MCF 10A (cell line): ENCODE measurements at regions of chr11 and their contacts with region 1.

Region 1: DNA sequence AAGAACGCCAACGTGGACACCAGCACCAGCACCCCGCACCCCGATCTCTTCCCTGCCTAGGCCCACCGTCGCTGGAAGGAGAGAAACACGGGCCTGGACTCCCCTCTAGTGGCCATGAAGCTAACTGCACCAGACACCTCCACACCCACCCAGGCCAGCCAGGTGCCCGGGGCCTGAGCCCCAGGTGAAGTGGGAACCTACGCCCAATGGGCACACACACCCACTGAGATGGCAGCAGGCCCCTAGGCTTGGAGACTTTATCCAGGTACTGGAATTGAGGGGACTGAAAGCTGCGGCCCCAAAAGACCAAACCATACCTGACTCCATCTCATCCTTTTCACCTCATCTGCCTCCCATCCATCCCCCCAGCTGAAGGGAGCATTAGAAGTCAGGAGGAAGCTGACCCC is 81.0 kb downstream of the BUD13 start:
- DNase-seq: peak; percentile 57
- H3K4me3 Mint-ChIP-seq: no peak overlapping the region
- H3K27ac Mint-ChIP-seq: no peak overlapping the region
- H3K4me1 Mint-ChIP-seq: peaks cover 17% of the 10 kb centered on the region
- H3K27me3 Mint-ChIP-seq: peaks cover 17% of the 10 kb centered on the region
- CTCF ChIP-seq: peak; percentile 92

Region 2: DNA sequence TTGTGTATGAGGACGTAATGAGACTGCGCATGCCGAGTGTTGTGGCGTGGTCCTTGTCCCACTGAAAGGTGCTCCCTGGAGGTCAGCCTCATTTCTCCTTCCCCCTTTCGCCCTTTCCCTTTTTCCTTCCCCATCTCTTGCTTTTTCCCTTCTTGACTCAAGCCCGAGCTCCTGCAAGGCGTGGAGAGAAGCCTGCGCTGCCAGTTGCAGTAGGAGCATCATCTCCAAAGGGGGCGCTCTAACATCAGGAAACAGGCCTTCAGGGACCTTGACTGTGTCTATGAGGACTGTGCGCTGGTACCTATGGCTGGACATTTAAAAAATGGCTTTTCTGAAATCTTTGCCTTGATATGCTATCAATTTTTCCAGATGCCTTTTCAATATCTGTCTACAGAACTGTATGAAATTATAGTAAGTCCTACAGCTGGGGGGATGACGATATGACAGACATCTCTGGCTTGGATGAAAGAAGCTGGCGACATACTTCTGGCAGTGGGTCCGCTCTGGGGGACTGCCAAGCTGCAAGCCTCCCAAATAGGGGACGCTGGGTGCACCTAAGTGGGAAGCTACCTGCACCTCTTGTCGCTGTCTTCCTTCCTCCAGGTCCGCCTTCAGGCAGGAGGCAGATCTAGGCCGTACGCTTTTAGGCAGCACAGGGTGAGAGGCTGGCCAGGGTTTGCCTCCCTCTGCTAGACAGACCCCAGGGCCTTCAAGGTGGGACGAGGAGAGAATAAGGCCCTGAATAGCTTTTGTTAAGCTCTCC is 1917.0 kb before region 1 on chr11:
- CTCF ChIA-PET with region 1: no interaction called
- POLR2A ChIA-PET with region 1: no interaction called
- intact Hi-C with region 1: loop called (anchors 1 kb)
- DNase-seq: peak; percentile 70
- H3K4me3 Mint-ChIP-seq: no peak overlapping the region
- H3K27ac Mint-ChIP-seq: no peak overlapping the region
- H3K4me1 Mint-ChIP-seq: no peaks in the 10 kb centered on the region
- H3K27me3 Mint-ChIP-seq: peaks cover 77% of the 10 kb centered on the region
- CTCF ChIP-seq: peak; percentile 68

Region 3: DNA sequence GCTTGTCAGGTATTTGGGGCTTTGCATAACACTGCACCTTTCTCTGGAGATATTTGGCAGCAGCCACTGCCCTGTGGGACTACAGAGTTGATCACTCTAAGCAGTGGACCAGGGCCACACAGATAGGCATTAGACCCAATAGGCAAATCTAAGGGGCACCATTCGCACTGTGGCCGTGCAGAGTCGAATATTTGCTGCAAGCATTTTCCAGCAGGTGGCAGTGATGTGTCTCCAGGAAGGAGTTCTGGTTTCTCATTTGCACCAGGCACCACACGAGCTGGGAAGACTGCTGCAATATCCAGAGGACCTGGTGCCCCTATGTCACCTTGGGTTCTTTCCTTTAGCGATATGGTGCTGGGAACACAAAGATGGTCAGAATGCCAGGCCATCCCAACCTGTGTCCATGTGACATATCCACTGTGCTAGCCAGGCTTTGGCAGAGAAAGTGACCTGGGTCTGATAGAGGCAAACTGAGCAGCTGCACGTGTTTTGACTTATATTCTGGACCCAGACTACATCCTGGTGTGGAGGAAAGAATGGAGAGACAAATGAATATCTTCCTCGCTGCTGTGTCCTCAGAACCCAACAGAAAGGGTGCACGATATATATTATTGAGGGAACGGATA is 237.6 kb before region 1 on chr11:
- CTCF ChIA-PET with region 1: interaction called, 13 read pairs
- POLR2A ChIA-PET with region 1: no interaction called
- intact Hi-C with region 1: no loop called
- DNase-seq: peak; percentile 43
- H3K4me3 Mint-ChIP-seq: no peak overlapping the region
- H3K27ac Mint-ChIP-seq: no peak overlapping the region
- H3K4me1 Mint-ChIP-seq: no peaks in the 10 kb centered on the region
- H3K27me3 Mint-ChIP-seq: no peaks in the 10 kb centered on the region
- CTCF ChIP-seq: peak; percentile 39

Region 4: DNA sequence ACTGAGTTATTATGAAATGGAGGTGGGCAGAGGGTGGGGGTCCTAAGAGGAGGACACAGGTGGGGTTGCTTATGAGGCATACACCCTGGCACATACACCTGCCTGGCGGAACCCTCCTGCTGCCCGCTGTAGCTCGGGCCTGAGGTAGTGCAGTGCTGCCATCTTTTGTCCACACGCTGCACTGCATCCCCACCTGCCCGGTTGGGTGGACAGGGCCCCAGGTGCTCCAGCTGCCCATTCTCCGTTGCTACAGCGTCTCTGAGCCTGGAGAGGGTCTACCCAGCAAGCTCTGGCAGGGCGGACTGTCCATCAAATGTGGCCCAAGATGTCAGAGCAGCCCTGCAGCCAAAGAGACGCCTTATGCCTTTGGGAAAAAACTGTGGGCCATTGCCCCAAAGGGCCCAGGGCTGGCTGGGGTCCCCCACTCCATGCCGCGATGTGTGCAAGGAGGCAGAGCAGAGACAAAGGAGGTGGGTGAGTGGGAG is 50.2 kb before region 1 on chr11:
- CTCF ChIA-PET with region 1: interaction called, 18 read pairs
- POLR2A ChIA-PET with region 1: no interaction called
- intact Hi-C with region 1: no loop called
- DNase-seq: peak; percentile 53
- H3K4me3 Mint-ChIP-seq: no peak overlapping the region
- H3K27ac Mint-ChIP-seq: no peak overlapping the region
- H3K4me1 Mint-ChIP-seq: peaks cover 5% of the 10 kb centered on the region
- H3K27me3 Mint-ChIP-seq: peaks cover 17% of the 10 kb centered on the region
- CTCF ChIP-seq: peak; percentile 90

Region 5: GRCh38 chr11:116703421-116703820 is 11.6 kb after region 1 on chr11:
- CTCF ChIA-PET with region 1: interaction called, 19 read pairs
- POLR2A ChIA-PET with region 1: no interaction called
- intact Hi-C with region 1: no loop called
- DNase-seq: no peak
- H3K4me3 Mint-ChIP-seq: no peak overlapping the region
- H3K27ac Mint-ChIP-seq: no peak overlapping the region
- H3K4me1 Mint-ChIP-seq: peaks cover 5% of the 10 kb centered on the region
- H3K27me3 Mint-ChIP-seq: no peaks in the 10 kb centered on the region
- CTCF ChIP-seq: no peak

Region 6: DNA sequence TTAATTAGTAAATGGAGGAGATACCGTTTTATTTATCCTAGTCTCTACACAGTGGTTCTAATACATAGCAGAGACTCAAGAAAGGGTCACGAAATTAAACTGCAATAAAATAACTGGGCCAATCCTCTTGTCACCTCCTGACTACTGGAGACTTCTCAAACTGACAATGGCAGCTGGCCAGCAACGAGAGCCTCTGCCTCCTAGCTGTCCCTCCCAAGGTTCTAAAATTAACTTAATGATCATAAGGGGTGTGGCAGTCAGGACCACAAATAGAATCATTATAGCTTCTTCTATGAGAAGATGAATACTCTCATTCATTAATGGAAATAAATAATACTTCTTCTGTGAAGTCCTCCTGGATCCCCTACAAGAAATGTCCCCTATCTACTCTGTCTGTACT is 209.4 kb after region 1 on chr11:
- CTCF ChIA-PET with region 1: no interaction called
- POLR2A ChIA-PET with region 1: no interaction called
- intact Hi-C with region 1: no loop called
- DNase-seq: no peak
- H3K4me3 Mint-ChIP-seq: no peak overlapping the region
- H3K27ac Mint-ChIP-seq: no peak overlapping the region
- H3K4me1 Mint-ChIP-seq: peaks cover 1% of the 10 kb centered on the region
- H3K27me3 Mint-ChIP-seq: no peaks in the 10 kb centered on the region
- CTCF ChIP-seq: no peak